OCI-LY7 (cell line): ENCODE measurements at regions of chr6 and their contacts with region 1.

Region 1: GRCh38 chr6:106163446-106163965 is 77.4 kb downstream of the PRDM1 start:
- DNase-seq: peak; percentile 74
- H3K4me3 ChIP-seq: peak overlapping the region; percentile 34
- H3K27ac ChIP-seq: peak overlapping the region; percentile 73
- H3K4me1 ChIP-seq: peaks cover 58% of the 10 kb centered on the region
- CTCF ChIP-seq: no peak

Region 2: DNA sequence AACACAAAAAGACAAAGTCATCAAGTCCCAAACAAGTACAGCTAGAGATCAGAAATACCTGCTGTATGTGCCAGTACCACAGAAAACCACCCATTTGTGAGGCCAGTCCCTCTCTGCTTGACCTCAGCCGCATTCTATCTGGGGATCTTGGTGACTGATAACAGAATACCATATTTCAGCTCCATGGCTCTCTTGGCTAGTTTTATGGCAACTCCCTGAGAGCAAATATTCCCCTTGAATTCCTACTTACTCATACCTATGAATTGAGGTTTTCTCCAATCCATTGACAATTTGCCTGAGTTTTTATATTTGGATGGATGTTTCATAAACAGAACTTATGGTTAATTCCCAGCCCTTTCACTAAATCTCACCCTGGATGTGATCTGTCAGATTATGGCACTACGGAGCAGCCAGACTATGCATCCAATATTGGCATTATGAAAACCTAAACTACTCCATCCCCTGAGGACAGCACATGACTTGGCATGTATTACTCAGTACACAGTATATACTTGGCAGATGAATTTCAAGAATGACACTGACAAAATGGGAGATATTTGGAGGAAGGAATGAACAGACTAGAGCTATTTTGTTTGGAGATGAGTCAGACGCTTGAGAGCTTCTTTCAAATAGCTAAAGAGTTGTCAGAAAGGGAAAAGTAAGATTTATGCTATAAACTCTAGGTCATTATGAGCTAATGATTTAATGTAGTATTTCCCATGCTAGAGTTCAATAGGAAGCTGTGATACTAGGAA is 18.3 kb after region 1 on chr6:
- CTCF ChIA-PET with region 1: interaction called, 3 read pairs
- POLR2A ChIA-PET with region 1: interaction called, 10 read pairs
- intact Hi-C with region 1: no loop called
- DNase-seq: no peak
- H3K4me3 ChIP-seq: no peak overlapping the region
- H3K27ac ChIP-seq: no peak overlapping the region
- H3K4me1 ChIP-seq: no peaks in the 10 kb centered on the region
- CTCF ChIP-seq: no peak